Activated T-helper 1 cell treated with anti-CD3 and anti-CD28 coated beads, Interleukin-12 subunit alpha, Interleukin-12 subunit beta, Interleukin-2, Interleukin-4 antibody, amounts not matched to agents 30 ng/mL and 10 ng/mL and 1 ng/mL, durations not matched to agents 14 hours and 24 hours and 36 hours (primary cell): ENCODE measurements at regions of chr6 and their contacts with region 1.

Region 1: DNA sequence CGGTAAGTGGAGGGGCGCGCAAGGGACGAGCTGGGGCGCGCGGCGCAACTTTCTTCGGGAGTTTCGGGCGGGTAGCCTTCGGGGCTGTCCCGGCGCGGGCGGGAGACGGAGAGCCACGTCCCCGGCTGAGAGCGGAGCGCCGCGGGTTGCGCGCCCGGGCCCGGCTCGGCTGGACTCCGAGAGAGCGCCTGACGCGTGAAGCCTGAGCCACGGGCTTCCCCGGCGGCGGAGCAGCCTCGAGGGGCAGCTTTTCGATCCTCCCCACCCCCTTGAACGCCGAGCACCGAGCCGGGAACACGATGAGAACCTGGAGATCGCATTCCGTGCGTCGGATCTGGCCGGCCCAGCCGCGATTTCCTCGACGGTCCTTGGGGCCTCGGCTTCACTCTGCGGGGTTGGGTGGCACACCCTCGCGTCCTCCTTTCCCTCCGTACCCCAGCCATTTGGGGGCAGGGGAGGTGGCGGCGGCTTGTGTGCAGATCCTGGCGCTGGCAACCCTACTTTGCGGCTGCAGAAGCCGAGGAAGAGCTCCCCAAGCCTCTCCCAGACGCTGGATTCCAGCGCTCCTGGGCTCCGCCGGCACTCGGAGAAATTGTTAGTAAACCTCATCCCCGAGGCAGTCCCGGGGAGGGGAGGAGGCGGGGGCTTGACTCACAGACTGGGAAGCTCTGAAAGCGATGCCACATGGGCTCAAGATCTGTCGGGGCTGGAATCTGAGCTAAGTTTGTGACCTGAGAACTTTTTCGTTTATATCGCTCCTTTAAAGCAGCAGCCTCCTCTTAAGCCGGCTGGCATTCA is 572 bp downstream of the DSE start:
- DNase-seq: no peak
- H3K4me3 Mint-ChIP-seq: peak overlapping the region; percentile 74
- H3K27ac Mint-ChIP-seq: no peak overlapping the region
- H3K4me1 Mint-ChIP-seq: peaks cover 24% of the 10 kb centered on the region
- H3K27me3 Mint-ChIP-seq: peaks cover 60% of the 10 kb centered on the region

Region 2: GRCh38 chr6:115958958-115959357 is 412.4 kb before region 1 on chr6:
- intact Hi-C with region 1: no loop called
- DNase-seq: no peak
- H3K4me3 Mint-ChIP-seq: no peak overlapping the region
- H3K27ac Mint-ChIP-seq: no peak overlapping the region
- H3K4me1 Mint-ChIP-seq: no peaks in the 10 kb centered on the region
- H3K27me3 Mint-ChIP-seq: no peaks in the 10 kb centered on the region

Region 3: DNA sequence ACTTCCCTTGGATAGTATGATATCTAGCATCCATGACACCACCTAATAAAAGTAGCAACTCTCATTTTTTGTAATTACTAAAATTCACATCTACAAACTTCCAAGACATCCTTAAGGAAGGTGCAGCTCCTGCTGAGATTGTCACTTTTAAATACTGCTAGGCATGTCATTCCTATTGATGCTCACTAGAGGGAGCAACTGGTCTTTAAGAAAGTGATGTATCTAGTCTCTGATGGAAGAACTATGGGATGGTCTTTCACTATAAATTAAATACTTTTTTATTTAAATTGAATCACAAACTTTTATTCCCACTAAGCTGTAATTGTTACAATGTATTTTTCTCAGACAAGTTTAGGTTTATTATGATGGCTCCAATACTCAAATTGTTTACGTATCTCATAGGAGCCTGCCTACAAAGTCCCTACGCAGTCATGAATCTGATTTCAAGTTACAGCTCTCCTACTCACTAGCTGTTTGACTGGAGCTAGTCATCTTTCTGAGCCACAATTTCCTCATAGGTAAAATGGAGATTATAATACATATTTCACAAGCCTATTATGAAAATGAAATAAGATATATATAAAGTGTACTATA is 83.5 kb before region 1 on chr6:
- intact Hi-C with region 1: loop called (anchors 5 kb)
- DNase-seq: no peak
- H3K4me3 Mint-ChIP-seq: no peak overlapping the region
- H3K27ac Mint-ChIP-seq: no peak overlapping the region
- H3K4me1 Mint-ChIP-seq: no peaks in the 10 kb centered on the region
- H3K27me3 Mint-ChIP-seq: peaks cover 9% of the 10 kb centered on the region

Region 4: GRCh38 chr6:116387374-116387773 is 16.1 kb after region 1 on chr6:
- intact Hi-C with region 1: loop called (anchors 2 kb)
- DNase-seq: no peak
- H3K4me3 Mint-ChIP-seq: no peak overlapping the region
- H3K27ac Mint-ChIP-seq: no peak overlapping the region
- H3K4me1 Mint-ChIP-seq: peaks cover 34% of the 10 kb centered on the region
- H3K27me3 Mint-ChIP-seq: peaks cover 14% of the 10 kb centered on the region

Region 5: GRCh38 chr6:116461932-116462885 is 90.9 kb after region 1 on chr6:
- intact Hi-C with region 1: loop called (anchors 5 kb)
- DNase-seq: peak; percentile 67
- H3K4me3 Mint-ChIP-seq: peak overlapping the region; percentile 87
- H3K27ac Mint-ChIP-seq: peak overlapping the region; percentile 87
- H3K4me1 Mint-ChIP-seq: peaks cover 89% of the 10 kb centered on the region
- H3K27me3 Mint-ChIP-seq: peaks cover 1% of the 10 kb centered on the region

Region 6: GRCh38 chr6:116476002-116476678 is 104.8 kb after region 1 on chr6:
- intact Hi-C with region 1: loop called (anchors 2 kb)
- DNase-seq: peak; percentile 54
- H3K4me3 Mint-ChIP-seq: peak overlapping the region; percentile 7
- H3K27ac Mint-ChIP-seq: peak overlapping the region; percentile 69
- H3K4me1 Mint-ChIP-seq: peaks cover 31% of the 10 kb centered on the region
- H3K27me3 Mint-ChIP-seq: peaks cover 11% of the 10 kb centered on the region

Region 7: DNA sequence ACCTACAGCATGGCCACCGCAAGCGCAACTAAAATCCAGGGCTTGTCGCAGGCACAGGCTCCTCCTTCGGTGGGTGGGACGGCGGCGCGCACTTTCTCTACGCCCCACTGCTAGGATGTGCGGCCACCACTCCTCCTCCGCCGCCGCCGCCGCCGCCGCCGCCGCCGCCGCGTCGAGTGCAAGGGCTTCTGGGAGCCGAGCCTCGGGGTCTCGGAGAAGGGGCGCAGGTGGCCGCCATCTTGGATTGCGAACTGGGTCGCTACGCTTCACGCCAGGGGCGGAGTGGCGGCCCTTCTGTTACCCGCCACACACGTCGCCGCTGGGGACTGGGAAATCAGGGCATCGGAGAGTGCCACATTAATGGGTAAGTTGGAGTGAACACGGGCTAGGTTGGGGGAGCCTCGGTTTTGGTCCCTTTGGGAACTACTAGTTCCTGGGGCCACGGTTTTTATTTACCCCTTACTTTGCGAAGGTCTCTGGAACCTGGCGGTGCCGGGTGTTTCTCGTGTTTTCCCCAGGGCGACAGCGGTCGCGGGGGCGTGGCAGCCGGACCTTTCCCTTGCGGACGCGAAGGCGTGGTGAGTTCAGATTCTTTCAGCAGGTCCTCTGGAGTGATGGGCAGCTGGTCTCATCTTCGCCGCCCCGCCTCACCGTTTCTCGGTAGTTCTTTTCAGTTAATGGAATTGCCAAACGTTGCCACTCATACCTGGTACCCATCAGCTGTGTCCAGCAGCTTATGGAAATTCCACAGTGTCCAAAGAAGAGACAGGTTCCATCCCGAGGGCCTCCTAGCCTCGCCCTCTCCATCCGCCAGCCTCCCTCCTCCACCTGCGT is 309.9 kb after region 1 on chr6 and contains the start of gene KPNA5:
- intact Hi-C with region 1: loop called (anchors 10 kb)
- DNase-seq: peak; percentile 84
- H3K4me3 Mint-ChIP-seq: peak within 1 kb of the TSS; percentile 97
- H3K27ac Mint-ChIP-seq: peak within 1 kb of the TSS; percentile 97
- H3K4me1 Mint-ChIP-seq: peaks cover 25% of the 10 kb centered on the region
- H3K27me3 Mint-ChIP-seq: no peaks in the 10 kb centered on the region
- total RNA-seq, gene KPNA5: 6.1 and 7.6 TPM in 2 replicates